GM23248 (cell line): ENCODE measurements at regions of chr15 and their contacts with region 1.

Region 1: DNA sequence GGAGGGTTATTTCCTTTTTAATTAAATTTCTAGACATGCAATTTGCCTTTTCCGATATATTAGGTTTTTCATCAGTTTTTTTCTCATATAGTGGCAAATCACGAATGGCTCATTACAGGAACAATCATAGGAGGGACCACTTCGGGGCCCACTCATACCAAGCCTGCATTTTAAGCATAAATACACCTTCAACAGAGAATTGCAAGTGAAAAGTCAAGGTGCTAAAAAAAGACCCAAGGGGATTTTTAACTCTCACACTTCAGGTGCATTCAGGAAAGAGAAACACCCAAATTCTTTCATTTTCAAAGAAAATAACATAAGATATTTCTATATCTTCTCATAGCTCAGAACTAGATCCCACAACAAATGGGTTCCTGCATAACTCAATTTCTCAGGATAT is 979.6 kb upstream of the NR2F2 start:
- DNase-seq: no peak
- H3K4me3 ChIP-seq: no peak overlapping the region
- H3K27ac ChIP-seq: no peak overlapping the region
- H3K4me1 ChIP-seq: no peaks in the 10 kb centered on the region
- H3K27me3 ChIP-seq: no peaks in the 10 kb centered on the region

Region 2: DNA sequence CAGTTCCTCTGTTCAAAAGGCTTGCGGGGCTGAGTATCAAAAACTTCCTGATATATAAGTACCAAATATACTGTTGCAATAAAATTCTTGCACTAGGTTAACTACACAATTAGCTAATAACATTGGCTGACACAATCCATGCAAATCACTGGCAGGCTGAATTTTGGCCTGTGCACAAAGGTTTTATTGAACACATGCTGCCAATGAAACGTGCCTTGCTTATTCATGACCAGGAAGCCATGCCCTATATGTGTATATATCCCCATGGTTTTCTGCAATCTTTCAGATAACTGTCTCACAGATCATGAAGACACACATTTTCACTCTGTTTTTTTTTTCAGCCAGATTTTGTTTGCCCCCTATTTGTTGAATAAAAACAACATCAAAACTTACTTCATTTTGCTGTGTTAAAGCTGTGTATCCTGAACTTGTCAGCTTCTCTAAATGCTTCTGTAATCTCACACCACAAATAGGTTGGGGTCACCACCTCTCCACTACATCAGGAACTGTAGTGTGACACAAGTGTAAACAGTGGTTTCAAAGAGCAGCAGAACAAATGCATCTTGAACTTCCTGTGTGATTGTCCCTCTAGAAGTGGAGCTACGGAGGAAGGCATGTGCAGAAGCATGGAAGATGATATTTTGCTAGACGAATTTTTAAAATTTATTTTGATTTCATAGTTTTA is 58.9 kb after region 1 on chr15:
- in situ Hi-C with region 1: loop called (anchors 10 kb)
- DNase-seq: no peak
- H3K4me3 ChIP-seq: no peak overlapping the region
- H3K27ac ChIP-seq: no peak overlapping the region
- H3K4me1 ChIP-seq: peaks cover 6% of the 10 kb centered on the region; the same call in 1 of the 2 replicates
- H3K27me3 ChIP-seq: no peaks in the 10 kb centered on the region